Sigmoid colon (tissue), 7 donors: ENCODE measurements at regions of chr2 and their contacts with region 1.

Region 1: GRCh38 chr2:23939987-23940717 is at the start of gene UBXN2A:
- DNase-seq: peak; percentile 82
- H3K4me3 ChIP-seq: peak within 1 kb of the TSS; percentile 63 to 98 (median 84)
- H3K27ac ChIP-seq: peak within 1 kb of the TSS; percentile 87 to 98 (median 94)
- H3K4me1 ChIP-seq: peaks cover 0 to 20% (median 14%) of the 10 kb centered on the region in 4 donors
- H3K27me3 ChIP-seq: no peaks in the 10 kb centered on the region
- CTCF ChIP-seq: no peak
- EP300 ChIP-seq: no peak
- POLR2A ChIP-seq: peak; percentile 22 to 30
- total RNA-seq, gene UBXN2A: 15.0 to 21.2 (median 16.3) TPM

Region 2: DNA sequence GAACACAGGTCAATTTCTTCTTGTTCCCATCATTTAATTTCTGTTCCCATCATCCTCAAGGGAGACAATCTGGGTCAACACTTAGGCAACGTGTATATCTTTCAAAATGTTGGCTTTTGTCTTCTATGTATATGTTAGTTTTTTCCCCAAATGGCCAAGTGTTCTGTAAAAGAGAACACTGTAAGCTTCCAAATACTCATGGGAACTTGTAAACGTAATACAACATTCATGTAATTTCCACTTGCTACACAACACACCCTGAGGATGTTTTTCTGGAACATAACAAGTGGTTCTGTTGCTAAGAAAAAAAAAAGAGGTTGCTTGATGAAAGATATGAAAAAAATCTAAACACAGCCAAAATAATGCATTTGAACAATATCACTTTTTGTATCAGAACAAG is 162.3 kb before region 1 on chr2:
- intact Hi-C with region 1: no loop called
- DNase-seq: no peak
- H3K4me3 ChIP-seq: no peak overlapping the region
- H3K27ac ChIP-seq: no peak overlapping the region
- H3K4me1 ChIP-seq: no peaks in the 10 kb centered on the region
- H3K27me3 ChIP-seq: no peaks in the 10 kb centered on the region
- CTCF ChIP-seq: no peak
- EP300 ChIP-seq: no peak
- POLR2A ChIP-seq: no peak

Region 3: GRCh38 chr2:23926750-23927571 is 13.2 kb before region 1 on chr2 and contains the start of gene ATAD2B:
- intact Hi-C with region 1: loop called (anchors 1 kb)
- DNase-seq: peak; percentile 95
- H3K4me3 ChIP-seq: peak within 1 kb of the TSS; percentile 66 to 93 (median 82)
- H3K27ac ChIP-seq: peak within 1 kb of the TSS; percentile 93 to 99 (median 95)
- H3K4me1 ChIP-seq: peaks cover 0 to 38% (median 28%) of the 10 kb centered on the region in 4 donors
- H3K27me3 ChIP-seq: no peaks in the 10 kb centered on the region
- CTCF ChIP-seq: peak; percentile 47 to 84 (median 51)
- EP300 ChIP-seq: no peak
- POLR2A ChIP-seq: peak; percentile 58 to 85
- total RNA-seq, gene ATAD2B: 19.7 to 22.5 (median 21.0) TPM

Region 4: DNA sequence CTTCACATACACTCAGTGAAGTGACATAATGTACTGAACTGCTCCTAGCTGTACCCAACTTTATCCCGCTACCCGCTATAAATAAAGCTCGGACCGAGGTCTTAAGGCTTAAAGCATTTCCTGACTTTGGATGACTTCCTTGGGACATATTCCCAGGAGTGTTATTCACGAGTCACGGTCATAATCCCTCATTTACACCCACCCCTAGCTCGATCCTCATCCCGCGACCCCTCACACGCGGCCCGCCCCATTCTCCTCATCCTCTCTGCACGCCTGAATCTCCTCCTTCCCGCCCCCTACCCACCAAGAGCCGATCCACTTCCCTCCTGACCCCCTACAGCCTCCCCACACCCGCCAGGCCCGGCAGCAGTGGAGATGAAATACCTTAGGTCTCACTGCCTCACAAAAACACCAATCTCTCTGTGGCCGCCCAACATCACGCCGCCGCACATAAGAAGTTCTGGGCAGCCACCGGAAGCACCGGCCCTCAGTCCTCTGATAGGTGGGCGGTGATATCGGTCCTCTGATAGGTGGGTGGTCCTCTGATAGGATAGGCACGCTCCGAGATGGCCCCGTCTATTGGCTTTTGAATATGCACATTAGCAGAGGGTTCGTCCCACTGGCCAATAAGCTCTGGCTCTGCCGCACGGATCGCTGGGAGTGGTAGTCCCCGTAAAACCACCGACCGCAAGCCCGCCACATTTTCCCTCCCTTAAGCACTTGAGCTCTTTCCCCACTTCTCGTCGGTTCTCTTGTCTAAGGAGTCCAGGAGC is 107.0 kb after region 1 on chr2 and contains the start of gene WDCP:
- intact Hi-C with region 1: loop called (anchors 5 kb)
- DNase-seq: peak; percentile 99
- H3K4me3 ChIP-seq: peak within 1 kb of the TSS; percentile 48 to 80 (median 70)
- H3K27ac ChIP-seq: peak within 1 kb of the TSS; percentile 57 to 84 (median 74)
- H3K4me1 ChIP-seq: peaks cover 0 to 41% (median 28%) of the 10 kb centered on the region in 4 donors
- H3K27me3 ChIP-seq: no peaks in the 10 kb centered on the region
- CTCF ChIP-seq: no peak
- EP300 ChIP-seq: no peak
- POLR2A ChIP-seq: peak; percentile 51 to 55
- total RNA-seq, gene WDCP: 3.1 to 10.0 (median 6.6) TPM